ENCODE measurements at regions of chr6 and their contacts with region 1.

Region 1: GRCh38 chr6:89371849-89372505 is 19.5 kb upstream of the UBE2J1 start:
- DNase-seq: peak; percentile 78

Region 2: DNA sequence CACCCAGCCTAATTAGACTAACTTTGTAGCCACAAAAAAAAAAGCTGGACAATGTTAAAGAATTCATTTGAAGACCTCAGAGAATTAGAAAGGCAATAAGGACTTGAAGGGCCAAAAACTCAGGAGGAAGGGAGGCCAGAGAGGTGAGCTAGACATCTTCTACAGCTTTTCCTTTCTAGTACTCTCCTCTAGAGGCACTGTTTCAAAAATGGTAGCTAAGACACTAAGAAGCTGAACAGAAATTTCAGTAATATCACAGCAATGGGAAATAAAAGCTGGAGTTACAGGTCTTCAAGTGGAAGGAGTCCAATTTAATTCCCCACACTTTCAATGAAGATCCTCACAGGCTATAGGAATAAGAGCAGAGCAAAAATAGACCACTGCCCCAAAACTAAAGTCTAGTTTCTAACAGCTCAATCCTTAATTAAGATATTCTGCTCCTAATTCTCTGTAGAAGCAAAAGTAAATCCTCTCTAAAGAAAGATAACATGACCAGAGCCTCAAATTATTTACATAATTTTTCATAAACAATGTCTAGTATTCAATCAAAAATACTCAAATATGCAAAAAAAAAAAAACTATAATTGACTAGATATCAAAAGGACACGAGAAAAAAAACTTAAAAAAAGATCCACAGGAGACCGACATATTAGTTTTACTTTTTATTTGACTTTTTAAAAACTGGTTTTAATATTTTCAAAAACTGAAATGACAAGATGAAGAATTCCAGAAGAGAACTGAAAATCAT is 472.2 kb before region 1 on chr6:
- CTCF ChIA-PET with region 1: interaction called, 11 read pairs
- POLR2A ChIA-PET with region 1: no interaction called
- DNase-seq: peak; percentile 8

Region 3: DNA sequence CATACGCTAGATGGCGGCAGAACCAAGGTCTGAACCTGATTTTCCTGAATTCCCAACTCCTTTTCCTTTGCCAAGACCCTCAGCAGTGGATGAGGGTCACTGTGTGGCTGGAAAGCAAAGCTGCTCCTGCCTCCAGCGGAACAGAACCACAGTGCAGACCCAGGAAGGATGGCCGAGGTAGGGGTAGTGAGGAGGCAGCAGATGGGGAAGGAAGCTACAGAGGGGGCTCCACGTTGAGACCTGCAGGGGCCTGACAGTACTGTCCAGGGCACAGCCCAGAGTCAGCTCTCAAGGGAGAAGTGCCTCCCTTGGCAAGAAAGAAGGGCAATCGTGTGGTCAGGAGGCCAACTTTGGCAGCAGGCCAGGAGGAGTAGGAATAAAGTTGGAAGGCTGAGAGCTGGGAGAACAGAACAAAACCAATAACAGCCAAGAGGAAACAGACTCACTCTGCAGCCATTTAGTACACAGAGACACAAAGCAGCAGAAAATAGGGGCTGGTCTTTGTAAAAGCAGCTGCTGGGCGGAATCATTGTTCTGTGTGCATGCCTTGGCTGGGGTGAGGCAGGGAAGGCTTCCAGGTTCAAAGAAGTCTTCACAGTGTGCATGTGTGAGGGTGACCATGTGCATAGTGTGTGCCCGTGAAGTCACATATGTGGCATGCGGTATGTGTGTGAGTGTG is 60.0 kb before region 1 on chr6:
- CTCF ChIA-PET with region 1: interaction called, 13 read pairs
- POLR2A ChIA-PET with region 1: no interaction called
- DNase-seq: peak; percentile 38

Region 4: GRCh38 chr6:89412071-89413005 is 40.4 kb after region 1 on chr6 and contains the start of gene RRAGD:
- CTCF ChIA-PET with region 1: interaction called, 15 read pairs
- POLR2A ChIA-PET with region 1: interaction called, 3 read pairs
- DNase-seq: peak; percentile 83

Region 5: DNA sequence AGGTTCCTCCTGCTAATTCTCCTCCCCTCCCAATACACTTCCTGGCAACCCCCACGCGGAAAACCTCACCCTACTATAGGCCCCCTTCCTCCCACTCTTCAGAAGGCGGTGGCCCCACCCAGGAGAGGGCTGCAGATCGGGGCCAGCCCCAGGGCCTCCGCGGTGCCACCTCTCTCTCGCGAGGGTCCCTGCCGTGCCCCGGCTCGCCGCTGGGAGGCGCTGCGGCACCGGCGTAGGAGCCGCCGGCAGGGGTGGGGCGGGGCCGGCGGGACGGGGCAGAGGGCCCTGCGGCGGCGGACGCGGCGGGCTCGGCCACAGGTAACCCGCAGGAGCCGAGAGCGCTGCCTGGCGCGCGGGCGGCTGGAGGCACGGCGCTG is 60.9 kb after region 1 on chr6 and contains the start of gene ANKRD6:
- CTCF ChIA-PET with region 1: interaction called, 18 read pairs
- POLR2A ChIA-PET with region 1: interaction called, 3 read pairs
- DNase-seq: peak; percentile 89

Region 6: GRCh38 chr6:89805814-89806371 is 433.9 kb after region 1 on chr6:
- CTCF ChIA-PET with region 1: no interaction called
- POLR2A ChIA-PET with region 1: no interaction called
- DNase-seq: no peak